ENCODE measurements at regions of chr2 and their contacts with region 1.

Region 1: GRCh38 chr2:86592547-86593230 is 29.4 kb upstream of the CHMP3 start:
- DNase-seq: peak in 1 of 2 donors; percentile 37
- ATAC-seq: peak in 3 of 8 donors; percentile 54 to 67 (median 57)
- H3K4me3 ChIP-seq: no peak overlapping the region
- H3K27ac ChIP-seq: peak overlapping the region in 7 of 10 donors; percentile 14 to 61 (median 33)
- H3K4me1 ChIP-seq: peaks cover 0 to 32% (median 8%) of the 10 kb centered on the region in 9 donors
- H3K27me3 ChIP-seq: no peaks in the 10 kb centered on the region
- CTCF ChIP-seq: no peak

Region 2: GRCh38 chr2:86541334-86541733 is 51.4 kb before region 1 on chr2:
- intact Hi-C with region 1: loop called in 1 of 10 experiments (anchors 10 kb)
- DNase-seq: no peak
- ATAC-seq: peak in 4 of 8 donors; percentile 17 to 51 (median 36)
- H3K4me3 ChIP-seq: no peak overlapping the region
- H3K27ac ChIP-seq: peak overlapping the region in 2 of 10 donors; percentile 17 to 34
- H3K4me1 ChIP-seq: peaks cover 0 to 43% (median 30%) of the 10 kb centered on the region in 9 donors
- H3K27me3 ChIP-seq: no peaks in the 10 kb centered on the region
- CTCF ChIP-seq: no peak

Region 3: DNA sequence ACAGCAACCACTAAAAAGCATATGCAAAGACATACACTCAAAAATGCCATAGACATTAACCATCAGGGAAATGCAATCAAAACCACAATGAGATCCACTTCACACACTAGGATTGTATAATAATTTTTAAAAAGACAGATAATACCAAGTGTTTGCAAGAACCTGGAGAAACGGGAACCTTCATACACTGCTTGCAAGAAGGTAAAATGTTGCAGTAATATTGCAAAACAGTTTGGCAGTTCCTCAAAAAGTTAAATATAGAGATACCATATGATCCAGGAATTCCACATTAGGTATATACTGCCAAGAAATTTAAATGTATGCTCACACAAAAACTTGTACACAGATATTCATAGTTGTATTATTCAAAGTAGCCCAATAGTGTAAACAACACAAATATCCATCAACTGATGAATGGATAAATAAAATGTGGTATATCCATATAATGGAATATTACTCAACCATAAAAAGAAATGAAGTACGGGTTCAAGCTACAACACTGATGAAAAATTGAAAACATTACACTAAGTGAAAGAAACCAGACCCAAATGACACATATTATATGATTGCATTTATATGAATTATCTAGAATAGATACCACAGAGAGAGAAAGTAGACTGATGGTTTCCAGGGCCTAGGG is 14.8 kb before region 1 on chr2:
- intact Hi-C with region 1: no loop called
- DNase-seq: no peak
- ATAC-seq: no peak
- H3K4me3 ChIP-seq: no peak overlapping the region
- H3K27ac ChIP-seq: no peak overlapping the region
- H3K4me1 ChIP-seq: no peaks in the 10 kb centered on the region
- H3K27me3 ChIP-seq: no peaks in the 10 kb centered on the region
- CTCF ChIP-seq: no peak

Measured in heart right ventricle (tissue), 16 donors.